A673 (cell line): ENCODE measurements at regions of chr6 and their contacts with region 1.

Region 1: GRCh38 chr6:82959385-82959941 is 106.2 kb downstream of the UBE3D start:
- DNase-seq: peak; percentile 54
- H3K4me3 ChIP-seq: no peak overlapping the region
- H3K27ac ChIP-seq: peak overlapping the region; percentile 35
- H3K4me1 ChIP-seq: peaks cover 32% of the 10 kb centered on the region
- H3K27me3 ChIP-seq: no peaks in the 10 kb centered on the region
- CTCF ChIP-seq: no peak

Region 2: DNA sequence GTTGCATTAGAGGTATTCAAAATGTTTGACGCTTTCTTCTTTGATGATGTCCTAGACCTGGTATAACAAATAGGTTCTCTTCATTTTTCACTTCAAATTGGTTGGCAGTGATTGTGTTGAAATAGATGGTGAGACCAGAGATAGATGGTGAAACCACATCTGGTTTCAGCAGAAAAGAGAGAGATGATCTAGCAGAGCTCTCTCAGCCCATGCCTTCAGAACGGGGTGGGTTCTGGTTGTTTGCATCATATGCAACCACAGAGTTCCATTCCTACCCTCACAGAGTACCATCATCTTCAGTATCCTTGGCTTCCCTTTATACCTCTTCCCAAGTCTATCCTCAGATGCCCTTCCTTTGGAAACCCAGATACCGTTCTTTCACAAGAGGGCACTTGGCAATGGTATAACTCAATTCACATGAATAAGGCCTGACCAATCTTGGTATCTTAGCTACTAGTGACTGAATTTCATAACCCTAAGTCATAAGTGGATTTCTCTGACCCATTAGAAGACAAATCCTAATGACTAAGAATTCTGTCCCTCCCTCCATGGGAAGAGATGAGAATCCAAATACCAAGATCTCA is 12.5 kb after region 1 on chr6:
- CTCF ChIA-PET with region 1: interaction called, 17 read pairs
- POLR2A ChIA-PET with region 1: no interaction called
- intact Hi-C with region 1: no loop called
- DNase-seq: no peak
- H3K4me3 ChIP-seq: no peak overlapping the region
- H3K27ac ChIP-seq: no peak overlapping the region
- H3K4me1 ChIP-seq: peaks cover 13% of the 10 kb centered on the region
- H3K27me3 ChIP-seq: no peaks in the 10 kb centered on the region
- CTCF ChIP-seq: no peak